Caco-2 (cell line): ENCODE measurements at regions of chr1 and their contacts with region 1.

Region 1: GRCh38 chr1:193069748-193070385 is 10.5 kb downstream of the RO60 start:
- DNase-seq: peak in 1 of 2 experiments; percentile 22
- H3K4me3 ChIP-seq: no peak overlapping the region
- H3K4me3 Mint-ChIP-seq: no peak overlapping the region
- H3K27ac Mint-ChIP-seq: no peak overlapping the region
- H3K4me1 ChIP-seq: no peaks in the 10 kb centered on the region
- H3K4me1 Mint-ChIP-seq: peaks cover 7% of the 10 kb centered on the region
- H3K27me3 ChIP-seq: no peaks in the 10 kb centered on the region
- H3K27me3 Mint-ChIP-seq: no peaks in the 10 kb centered on the region
- CTCF ChIP-seq: peak in 1 of 2 experiments; percentile 54

Region 2: DNA sequence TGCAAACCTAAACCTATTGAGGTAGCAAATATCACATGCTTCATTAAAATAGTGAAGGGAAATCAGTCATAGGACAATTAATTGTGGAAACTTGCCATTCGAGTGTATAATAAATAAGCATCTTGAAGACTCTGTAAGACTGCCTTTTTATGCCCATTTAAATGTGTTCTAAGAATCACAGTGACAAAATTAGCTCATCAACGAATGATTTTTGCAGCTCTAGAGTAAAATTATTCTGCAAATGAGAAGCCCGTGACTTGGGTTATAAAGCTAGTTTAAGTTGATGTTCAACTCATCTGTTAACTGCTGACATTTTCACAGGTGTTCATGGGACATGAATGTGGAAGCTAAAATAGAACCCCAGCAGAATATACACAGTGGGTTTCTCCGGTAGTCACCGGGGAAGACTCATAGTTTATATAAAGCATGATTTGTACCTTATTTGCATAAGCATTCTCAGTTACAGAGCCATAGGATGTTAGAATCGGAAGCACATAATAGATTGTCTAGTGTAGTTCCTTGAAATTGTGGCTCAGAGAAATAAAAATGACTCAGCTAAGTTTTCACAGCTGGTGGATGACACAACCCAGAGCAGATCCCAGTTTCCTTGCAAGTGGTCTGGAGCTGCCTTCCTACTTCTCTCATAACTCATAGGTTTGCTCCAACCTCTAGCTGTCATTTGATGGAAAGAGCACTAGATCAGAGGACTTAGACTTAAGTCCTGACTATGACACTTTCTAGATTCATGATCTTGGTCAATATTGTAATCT is 118.0 kb before region 1 on chr1:
- CTCF ChIA-PET with region 1: no interaction called
- POLR2A ChIA-PET with region 1: no interaction called
- intact Hi-C with region 1: no loop called
- DNase-seq: no peak
- H3K4me3 ChIP-seq: no peak overlapping the region
- H3K4me3 Mint-ChIP-seq: no peak overlapping the region
- H3K27ac Mint-ChIP-seq: no peak overlapping the region
- H3K4me1 ChIP-seq: no peaks in the 10 kb centered on the region
- H3K4me1 Mint-ChIP-seq: peaks cover 5% of the 10 kb centered on the region
- H3K27me3 ChIP-seq: no peaks in the 10 kb centered on the region
- H3K27me3 Mint-ChIP-seq: no peaks in the 10 kb centered on the region
- CTCF ChIP-seq: no peak

Region 3: GRCh38 chr1:193104906-193105820 is 35.3 kb after region 1 on chr1 and contains the start of gene GLRX2:
- CTCF ChIA-PET with region 1: interaction called, 6 read pairs
- POLR2A ChIA-PET with region 1: no interaction called
- intact Hi-C with region 1: loop called (anchors 2 kb)
- DNase-seq: peak; percentile 88 to 90
- H3K4me3 ChIP-seq: peak within 1 kb of the TSS; percentile 57
- H3K4me3 Mint-ChIP-seq: peak within 1 kb of the TSS; percentile 79
- H3K27ac Mint-ChIP-seq: peak within 1 kb of the TSS; percentile 75
- H3K4me1 ChIP-seq: peaks cover 8% of the 10 kb centered on the region; the same call in 1 of the 2 replicates
- H3K4me1 Mint-ChIP-seq: peaks cover 13% of the 10 kb centered on the region
- H3K27me3 ChIP-seq: no peaks in the 10 kb centered on the region
- H3K27me3 Mint-ChIP-seq: no peaks in the 10 kb centered on the region
- CTCF ChIP-seq: peak in 1 of 2 experiments; percentile 5
- total RNA-seq, gene GLRX2: 20.7 and 21.5 TPM in 2 replicates